ENCODE measurements at regions of chr11 and their contacts with region 1.

Region 1: DNA sequence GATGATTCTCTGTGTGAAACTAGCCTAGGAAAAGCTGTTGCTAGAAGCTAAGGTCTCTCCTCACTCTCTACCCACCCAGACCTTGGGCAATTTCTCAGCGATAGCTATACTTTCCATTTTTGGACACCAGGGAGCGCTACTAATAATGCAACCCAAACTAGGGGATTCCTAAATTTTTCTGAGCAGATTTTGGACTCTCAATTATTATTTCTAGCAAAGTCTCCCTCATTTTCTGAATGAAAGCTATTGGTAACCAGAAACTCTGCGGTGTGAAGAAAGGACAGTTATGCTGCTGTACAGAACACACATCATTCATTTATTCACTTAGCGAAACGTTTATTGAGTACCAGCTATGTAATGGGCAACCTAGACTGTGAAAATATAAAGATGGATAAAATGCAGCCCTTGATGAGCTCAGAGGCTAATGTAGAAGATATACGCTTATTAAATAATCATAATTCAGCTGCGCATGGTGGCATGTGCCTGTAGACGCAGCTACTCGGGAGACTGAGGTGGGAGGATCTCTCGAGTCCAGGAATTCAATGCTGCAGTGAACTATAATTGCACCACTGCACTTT is 6.1 kb upstream of the STIM1 start:
- DNase-seq: no peak
- ATAC-seq: peak; percentile 87
- H3K4me3 Mint-ChIP-seq: no peak overlapping the region
- H3K27ac Mint-ChIP-seq: no peak overlapping the region
- H3K4me1 Mint-ChIP-seq: peaks cover 9% of the 10 kb centered on the region
- H3K27me3 Mint-ChIP-seq: no peaks in the 10 kb centered on the region
- CTCF ChIP-seq: peak; percentile 37

Region 2: DNA sequence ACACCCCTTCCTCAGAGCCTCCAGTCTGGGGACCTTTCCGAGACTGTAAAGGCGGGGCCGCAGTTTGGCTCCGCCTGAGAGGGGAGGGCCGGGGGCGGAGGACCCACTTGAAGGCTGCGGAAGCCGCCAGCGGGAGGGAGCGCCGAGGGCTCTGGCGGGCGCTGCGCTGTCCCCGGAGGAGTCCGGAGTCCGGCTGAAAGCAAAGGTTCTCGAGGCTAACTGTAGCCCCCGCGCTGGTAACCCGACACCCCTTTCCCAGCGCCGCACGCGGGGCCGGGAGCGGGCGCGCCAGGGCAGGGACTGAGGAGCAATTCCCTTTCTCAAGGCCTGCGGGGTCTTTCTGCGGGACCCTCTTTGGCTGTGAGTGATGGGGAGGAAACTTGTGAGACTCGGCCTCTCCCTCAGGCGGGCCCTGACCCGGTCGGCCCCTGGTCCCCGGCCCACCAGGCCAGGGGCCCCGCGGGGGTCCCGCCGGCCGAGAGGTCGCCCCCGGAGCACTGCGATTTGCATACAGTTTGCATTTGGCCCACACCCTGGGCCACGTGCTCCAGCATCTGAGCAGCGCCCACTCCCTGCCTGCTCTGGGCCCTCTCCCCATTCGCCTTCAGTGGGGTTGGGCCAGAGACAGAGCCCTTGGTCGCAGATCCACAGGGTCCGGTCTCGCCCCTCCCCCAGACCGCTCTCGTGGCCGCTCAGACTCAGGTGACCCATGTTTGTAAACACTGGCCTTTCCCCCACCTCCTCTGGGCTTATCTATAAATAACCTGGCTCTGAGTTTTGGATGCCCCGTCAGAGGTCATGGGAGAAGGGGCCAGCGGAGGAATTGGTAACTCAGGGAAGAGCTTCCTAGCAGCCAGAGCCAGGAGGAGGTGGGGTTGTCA is 207.1 kb before region 1 on chr11:
- CTCF ChIA-PET with region 1: no interaction called
- POLR2A ChIA-PET with region 1: no interaction called
- DNase-seq: peak; percentile 96
- ATAC-seq: peak; percentile 93
- H3K4me3 Mint-ChIP-seq: peak overlapping the region; percentile 84
- H3K27ac Mint-ChIP-seq: peak overlapping the region; percentile 97
- H3K4me1 Mint-ChIP-seq: peaks cover 10% of the 10 kb centered on the region
- H3K27me3 Mint-ChIP-seq: peaks cover 28% of the 10 kb centered on the region
- CTCF ChIP-seq: no peak

Region 3: GRCh38 chr11:3786781-3787428 is 62.5 kb before region 1 on chr11:
- CTCF ChIA-PET with region 1: no interaction called
- POLR2A ChIA-PET with region 1: no interaction called
- DNase-seq: no peak
- ATAC-seq: no peak
- H3K4me3 Mint-ChIP-seq: no peak overlapping the region
- H3K27ac Mint-ChIP-seq: peak overlapping the region; percentile 55
- H3K4me1 Mint-ChIP-seq: peaks cover 11% of the 10 kb centered on the region
- H3K27me3 Mint-ChIP-seq: no peaks in the 10 kb centered on the region
- CTCF ChIP-seq: no peak

Region 4: DNA sequence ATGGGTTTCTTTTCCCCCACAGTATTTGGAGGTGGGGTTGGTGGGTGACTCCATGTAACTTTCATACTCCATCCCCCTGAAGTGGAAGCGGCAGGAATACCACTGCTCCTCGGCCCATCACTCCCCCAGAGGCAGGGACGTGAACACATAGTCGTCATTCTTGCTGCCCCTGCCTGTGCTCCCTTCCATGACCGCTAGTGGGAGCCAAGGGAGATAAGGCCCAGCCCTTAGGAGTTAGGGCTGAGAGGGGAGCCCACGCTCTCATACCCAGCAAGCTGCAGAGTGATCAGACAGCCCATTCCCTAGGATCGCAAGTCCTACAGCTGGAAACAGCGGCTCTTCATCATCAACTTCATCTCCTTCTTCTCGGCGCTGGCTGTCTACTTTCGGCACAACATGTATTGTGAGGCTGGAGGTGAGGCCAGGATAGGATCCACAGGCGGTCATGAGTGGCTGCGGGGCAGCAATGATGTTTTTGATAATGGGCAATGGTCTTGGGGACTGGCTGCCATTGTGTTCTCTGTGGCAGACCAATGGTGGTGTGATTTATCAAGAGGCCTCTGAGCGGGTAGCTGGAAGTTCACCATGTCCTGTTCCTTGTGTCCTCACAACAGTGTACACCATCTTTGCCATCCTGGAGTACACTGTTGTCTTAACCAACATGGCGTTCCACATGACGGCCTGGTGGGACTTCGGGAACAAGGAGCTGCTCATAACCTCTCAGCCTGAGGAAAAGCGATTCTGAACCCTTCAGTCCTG is 24.5 kb before region 1 on chr11:
- CTCF ChIA-PET with region 1: interaction called, 24 read pairs
- POLR2A ChIA-PET with region 1: no interaction called
- DNase-seq: peak; percentile 94
- ATAC-seq: peak; percentile 92
- H3K4me3 Mint-ChIP-seq: no peak overlapping the region
- H3K27ac Mint-ChIP-seq: peak overlapping the region; percentile 26
- H3K4me1 Mint-ChIP-seq: peaks cover 41% of the 10 kb centered on the region
- H3K27me3 Mint-ChIP-seq: no peaks in the 10 kb centered on the region
- CTCF ChIP-seq: peak; percentile 87

Region 5: GRCh38 chr11:3867209-3868091 is 18.1 kb after region 1 on chr11:
- CTCF ChIA-PET with region 1: interaction called, 40 read pairs
- POLR2A ChIA-PET with region 1: no interaction called
- DNase-seq: no peak
- ATAC-seq: no peak
- H3K4me3 Mint-ChIP-seq: no peak overlapping the region
- H3K27ac Mint-ChIP-seq: no peak overlapping the region
- H3K4me1 Mint-ChIP-seq: peaks cover 8% of the 10 kb centered on the region
- H3K27me3 Mint-ChIP-seq: peaks cover 3% of the 10 kb centered on the region; the same call in 1 of the 2 replicates
- CTCF ChIP-seq: no peak

Region 6: DNA sequence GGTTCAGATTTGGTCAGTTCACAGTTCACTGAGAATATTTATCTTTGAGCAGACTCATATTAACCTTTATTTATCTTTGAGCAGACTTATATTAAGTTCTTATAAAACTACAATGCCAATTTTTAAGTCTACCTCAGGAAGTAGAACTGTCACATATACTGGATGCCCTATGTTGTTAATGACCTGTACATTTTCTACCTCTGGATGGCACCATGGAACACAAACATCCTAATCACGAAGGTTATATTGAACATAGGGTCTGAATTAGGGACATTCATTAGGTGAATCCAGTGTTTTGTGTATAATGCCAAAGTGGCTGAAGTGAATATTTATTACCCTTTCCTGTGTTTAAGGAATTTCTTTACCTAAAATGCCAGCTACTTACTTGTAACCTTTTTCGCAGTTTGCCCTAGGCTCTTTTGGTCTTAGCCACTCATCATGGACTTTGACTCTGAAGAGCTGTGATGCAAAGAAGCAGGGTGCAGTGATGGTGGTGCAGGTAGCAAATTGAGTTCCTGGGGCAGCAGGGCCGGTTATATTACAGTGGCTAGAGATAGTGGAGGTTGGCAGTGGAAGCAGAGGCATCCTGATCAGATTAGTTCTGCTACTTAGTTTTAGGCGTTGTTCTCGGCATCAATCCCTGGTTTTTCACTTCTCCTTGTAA is 77.9 kb after region 1 on chr11:
- CTCF ChIA-PET with region 1: interaction called, 12 read pairs
- POLR2A ChIA-PET with region 1: no interaction called
- DNase-seq: no peak
- ATAC-seq: no peak
- H3K4me3 Mint-ChIP-seq: no peak overlapping the region
- H3K27ac Mint-ChIP-seq: no peak overlapping the region
- H3K4me1 Mint-ChIP-seq: no peaks in the 10 kb centered on the region; the same call in 1 of the 2 replicates
- H3K27me3 Mint-ChIP-seq: peaks cover 2% of the 10 kb centered on the region; the same call in 1 of the 2 replicates
- CTCF ChIP-seq: no peak

Region 7: GRCh38 chr11:3984896-3985295 is 135.5 kb after region 1 on chr11:
- CTCF ChIA-PET with region 1: interaction called, 28 read pairs
- POLR2A ChIA-PET with region 1: no interaction called
- DNase-seq: peak; percentile 28
- ATAC-seq: peak; percentile 71
- H3K4me3 Mint-ChIP-seq: no peak overlapping the region
- H3K27ac Mint-ChIP-seq: no peak overlapping the region
- H3K4me1 Mint-ChIP-seq: peaks cover 7% of the 10 kb centered on the region
- H3K27me3 Mint-ChIP-seq: peaks cover 19% of the 10 kb centered on the region
- CTCF ChIP-seq: no peak

Measured in WTC11 (cell line).